ENCODE measurements at regions of chr5 and their contacts with region 1.

Region 1: DNA sequence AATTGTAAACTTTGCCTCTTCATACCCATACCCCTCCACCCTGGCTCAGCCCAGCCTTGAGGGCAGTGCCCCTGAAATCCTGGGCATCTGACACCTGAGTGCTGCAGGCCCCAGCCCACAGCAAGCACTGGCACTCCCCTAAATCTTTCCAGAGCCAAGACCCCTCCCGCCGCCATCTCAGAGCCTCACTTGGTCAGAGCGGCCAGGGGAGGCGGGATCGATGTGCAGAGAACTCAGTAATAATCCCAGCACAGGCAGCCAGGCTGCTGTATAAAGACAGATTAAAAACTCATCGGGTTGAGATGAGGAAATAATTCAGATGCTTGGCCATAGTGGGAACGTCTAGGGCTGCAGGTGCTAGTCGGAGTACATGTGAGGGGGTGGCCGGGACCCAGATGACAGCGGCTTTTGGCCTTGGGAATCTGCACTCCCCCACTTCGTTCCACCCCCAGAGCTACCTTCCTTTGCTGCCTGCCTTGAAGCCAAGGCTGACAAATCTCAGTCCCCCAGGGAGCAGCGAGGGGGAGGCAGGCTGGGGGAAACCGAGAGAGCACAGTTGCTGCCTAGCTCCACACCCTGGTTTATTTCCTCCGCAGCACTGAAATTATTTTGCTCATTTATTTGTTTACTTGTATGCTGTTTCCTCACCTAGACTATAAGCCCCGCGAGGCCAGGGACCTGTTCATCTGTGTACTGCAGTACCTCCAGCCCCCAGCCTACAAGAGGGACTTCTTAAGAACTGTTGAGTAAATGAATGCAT is 19.5 kb upstream of the ARAP3 start:
- DNase-seq: peak; percentile 47
- ATAC-seq: peak; percentile 46
- H3K4me3 Mint-ChIP-seq: peak overlapping the region; percentile 59
- H3K27ac Mint-ChIP-seq: no peak overlapping the region
- H3K4me1 Mint-ChIP-seq: peaks cover 20% of the 10 kb centered on the region
- H3K27me3 Mint-ChIP-seq: peaks cover 27% of the 10 kb centered on the region

Region 2: DNA sequence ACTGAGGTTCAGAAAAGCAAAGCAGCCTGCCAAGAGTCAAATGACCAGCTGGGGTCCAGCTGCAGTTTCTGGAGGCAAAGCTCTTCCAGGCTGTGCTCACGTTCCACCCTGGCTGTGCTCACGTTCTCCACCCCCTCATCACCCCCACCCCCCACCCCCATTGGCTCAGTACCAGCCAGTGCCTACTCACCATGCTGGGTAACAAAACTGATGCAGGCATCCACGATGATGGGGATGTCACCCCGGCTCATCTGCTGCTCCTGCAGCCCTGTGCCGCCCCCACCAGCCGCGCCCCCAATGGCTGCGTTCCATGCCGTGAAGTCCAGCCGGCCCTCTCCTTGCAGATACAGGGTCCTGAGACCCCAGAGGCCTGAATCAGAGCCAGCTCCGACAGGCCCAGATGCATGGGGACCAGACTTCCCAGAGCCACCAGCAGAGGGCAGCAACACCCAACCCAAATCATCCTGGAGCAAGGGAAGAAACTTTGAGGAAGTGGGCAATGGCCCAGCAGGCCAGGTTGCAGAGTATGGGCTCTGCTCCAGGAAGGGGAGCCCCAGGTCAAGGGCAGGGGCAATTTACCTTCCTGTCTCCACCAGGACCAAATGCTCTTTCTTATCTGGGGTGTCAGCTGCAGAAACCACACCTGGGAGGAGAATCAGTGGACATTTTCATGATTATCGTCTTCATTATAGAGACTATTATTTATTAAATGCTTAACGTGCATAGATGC is 36.6 kb before region 1 on chr5:
- CTCF ChIA-PET with region 1: interaction called, 4 read pairs
- POLR2A ChIA-PET with region 1: no interaction called
- intact Hi-C with region 1: loop called in 1 of 2 experiments (anchors 1 kb)
- DNase-seq: peak; percentile 86
- ATAC-seq: peak; percentile 97
- H3K4me3 Mint-ChIP-seq: no peak overlapping the region
- H3K27ac Mint-ChIP-seq: no peak overlapping the region
- H3K4me1 Mint-ChIP-seq: peaks cover 4% of the 10 kb centered on the region
- H3K27me3 Mint-ChIP-seq: no peaks in the 10 kb centered on the region

Region 3: DNA sequence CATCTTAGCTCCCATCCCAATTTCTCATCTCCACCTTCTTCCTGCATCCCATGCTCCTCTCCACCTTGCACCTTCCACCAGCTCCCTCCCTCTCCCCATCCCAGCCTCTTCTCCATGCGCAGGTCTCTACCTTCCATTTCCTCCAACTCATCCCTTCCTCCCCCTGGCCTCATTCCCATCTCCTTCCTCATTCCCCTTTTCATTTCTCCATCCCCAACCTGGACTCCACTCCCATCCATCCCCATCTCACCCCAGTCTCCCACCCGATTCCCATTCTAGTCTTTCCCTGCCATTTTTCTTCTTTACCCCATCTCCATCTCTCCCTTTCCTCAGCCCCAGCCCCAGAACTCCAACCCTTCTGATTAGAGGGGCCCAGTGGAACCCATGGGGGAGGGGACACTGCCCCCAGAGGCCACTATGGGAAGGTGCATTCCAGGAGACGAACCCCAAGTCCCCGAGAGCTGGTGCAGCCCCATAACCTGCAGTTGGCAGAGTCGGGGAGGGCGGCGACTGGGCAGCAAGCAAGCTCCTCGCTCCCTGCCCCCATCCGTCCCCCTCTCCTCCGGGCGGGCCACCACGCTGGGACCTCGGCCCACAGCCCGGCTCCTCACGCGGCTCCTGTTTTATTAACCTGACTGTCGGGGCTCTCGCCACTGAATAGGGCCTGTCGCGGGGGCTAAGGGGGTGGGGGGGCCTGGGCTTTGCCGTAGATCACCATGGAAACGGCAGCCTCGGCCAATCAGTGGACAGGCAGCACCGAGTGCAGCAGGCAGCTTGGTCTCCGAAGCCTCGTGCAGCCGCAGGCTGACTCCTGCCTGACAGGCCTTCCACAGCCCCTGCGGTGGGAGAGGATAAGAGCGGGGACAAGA is 110.0 kb after region 1 on chr5:
- CTCF ChIA-PET with region 1: interaction called, 8 read pairs
- POLR2A ChIA-PET with region 1: no interaction called
- intact Hi-C with region 1: loop called (anchors 2 kb)
- DNase-seq: peak; percentile 52
- ATAC-seq: peak; percentile 83
- H3K4me3 Mint-ChIP-seq: no peak overlapping the region
- H3K27ac Mint-ChIP-seq: no peak overlapping the region
- H3K4me1 Mint-ChIP-seq: no peaks in the 10 kb centered on the region
- H3K27me3 Mint-ChIP-seq: peaks cover 41% of the 10 kb centered on the region

Region 4: DNA sequence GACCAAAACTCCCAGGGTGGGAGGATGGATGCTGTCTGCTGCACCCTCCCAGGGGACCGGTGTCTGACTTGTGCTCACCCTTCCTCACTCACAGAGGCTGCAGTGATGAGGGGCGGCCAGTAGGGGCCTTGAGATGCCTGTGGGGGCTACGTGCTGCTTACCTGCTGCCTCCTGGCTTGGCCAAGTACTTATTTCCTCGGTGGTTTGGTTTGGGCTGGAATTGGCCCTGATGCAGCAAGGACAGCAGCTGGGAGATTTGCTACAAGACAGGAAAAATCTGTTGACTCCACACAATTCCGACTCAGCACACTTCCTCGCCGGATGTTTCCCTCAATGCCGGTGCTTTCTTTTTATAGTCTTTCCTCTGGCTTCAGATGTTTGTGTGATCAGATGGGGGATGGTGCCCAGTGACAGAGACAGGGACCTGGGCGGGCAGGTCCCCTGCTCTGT is 249.8 kb after region 1 on chr5:
- CTCF ChIA-PET with region 1: interaction called, 12 read pairs
- POLR2A ChIA-PET with region 1: no interaction called
- intact Hi-C with region 1: no loop called
- DNase-seq: peak; percentile 57
- ATAC-seq: peak; percentile 84
- H3K4me3 Mint-ChIP-seq: no peak overlapping the region
- H3K27ac Mint-ChIP-seq: no peak overlapping the region
- H3K4me1 Mint-ChIP-seq: peaks cover 7% of the 10 kb centered on the region
- H3K27me3 Mint-ChIP-seq: no peaks in the 10 kb centered on the region

Region 5: GRCh38 chr5:142053426-142054151 is 352.0 kb after region 1 on chr5:
- CTCF ChIA-PET with region 1: no interaction called
- POLR2A ChIA-PET with region 1: no interaction called
- intact Hi-C with region 1: no loop called
- DNase-seq: peak; percentile 19
- ATAC-seq: peak; percentile 93
- H3K4me3 Mint-ChIP-seq: no peak overlapping the region
- H3K27ac Mint-ChIP-seq: peak overlapping the region; percentile 55
- H3K4me1 Mint-ChIP-seq: peaks cover 28% of the 10 kb centered on the region
- H3K27me3 Mint-ChIP-seq: no peaks in the 10 kb centered on the region